ENCODE measurements at regions of chr12 and their contacts with region 1.

Region 1: GRCh38 chr12:118372541-118373495 is at the start of gene TAOK3:
- DNase-seq: peak; percentile 94 to 99 (median 96)
- ATAC-seq: peak; percentile 85
- H3K4me3 ChIP-seq: peak within 1 kb of the TSS; percentile 85 to 89
- H3K4me3 Mint-ChIP-seq: peak within 1 kb of the TSS; percentile 92
- H3K27ac ChIP-seq: peak within 1 kb of the TSS; percentile 67 to 73
- H3K27ac Mint-ChIP-seq: peak within 1 kb of the TSS; percentile 95
- H3K4me1 ChIP-seq: peaks cover 31% of the 10 kb centered on the region
- H3K4me1 Mint-ChIP-seq: peaks cover 54% of the 10 kb centered on the region
- H3K27me3 ChIP-seq: no peaks in the 10 kb centered on the region
- H3K27me3 Mint-ChIP-seq: no peaks in the 10 kb centered on the region
- CTCF ChIP-seq: no peak
- total RNA-seq, gene TAOK3: 46.5 to 47.3 TPM

Region 2: DNA sequence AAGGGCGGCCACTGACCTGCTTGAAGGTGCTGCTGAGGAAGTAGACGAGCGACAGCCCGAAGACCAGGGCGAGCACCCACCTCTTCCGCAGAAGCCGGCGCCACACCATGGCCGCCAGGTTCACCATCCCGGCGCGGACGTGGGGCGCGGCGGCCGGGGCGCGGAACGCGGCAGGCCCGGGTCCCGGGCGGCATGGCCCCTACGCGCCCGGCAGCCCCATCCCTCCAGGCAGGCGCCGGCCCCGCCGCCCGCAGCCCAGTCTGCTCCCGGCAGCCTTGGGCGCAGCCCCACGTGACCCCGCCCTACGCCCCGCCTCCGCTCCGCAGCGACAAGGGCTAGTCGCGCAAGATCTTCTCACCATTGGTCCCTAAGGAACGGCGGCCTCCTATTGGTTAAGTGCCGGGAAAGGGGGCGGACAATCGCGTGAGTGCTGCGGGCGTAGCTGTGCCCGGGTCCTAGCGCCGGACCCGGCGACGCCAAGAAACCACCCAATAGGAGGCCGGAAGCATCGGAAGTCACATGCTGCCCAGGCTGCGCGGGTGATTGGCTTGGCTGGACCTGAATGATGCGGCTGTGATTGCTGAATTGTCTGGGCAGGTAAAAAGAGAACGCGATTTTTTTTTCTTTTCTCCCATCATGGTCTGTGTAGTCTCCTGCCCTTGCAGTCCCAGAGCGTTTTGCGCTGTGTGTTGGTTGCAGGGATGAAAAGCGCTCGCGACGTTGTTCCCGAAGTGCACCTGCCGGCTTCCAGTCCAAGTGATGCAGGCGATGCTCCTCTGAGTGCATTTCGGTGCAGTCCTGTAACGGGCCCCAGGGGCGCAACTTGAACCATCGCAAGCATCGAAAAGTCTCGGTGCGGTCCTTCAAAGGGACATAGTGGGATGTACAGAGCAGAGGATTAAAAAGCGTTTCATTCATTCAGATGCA is 1634.8 kb before region 1 on chr12 and contains the starts of genes RNFT2 and SPRING1:
- CTCF ChIA-PET with region 1: no interaction called
- POLR2A ChIA-PET with region 1: no interaction called
- intact Hi-C with region 1: loop called (anchors 10 kb)
- DNase-seq: peak; percentile 98 to 99 (median 99)
- ATAC-seq: peak; percentile 97
- H3K4me3 ChIP-seq: peak within 1 kb of the TSS; percentile 76 to 82
- H3K4me3 Mint-ChIP-seq: peak within 1 kb of the TSS; percentile 95
- H3K27ac ChIP-seq: peak within 1 kb of the TSS; percentile 55 to 61
- H3K27ac Mint-ChIP-seq: peak within 1 kb of the TSS; percentile 91
- H3K4me1 ChIP-seq: peaks cover 13% of the 10 kb centered on the region
- H3K4me1 Mint-ChIP-seq: peaks cover 39% of the 10 kb centered on the region
- H3K27me3 ChIP-seq: no peaks in the 10 kb centered on the region
- H3K27me3 Mint-ChIP-seq: no peaks in the 10 kb centered on the region
- CTCF ChIP-seq: no peak
- total RNA-seq, gene RNFT2: 3.8 to 4.1 TPM
- total RNA-seq, gene SPRING1: 14.1 to 14.4 TPM

Region 3: DNA sequence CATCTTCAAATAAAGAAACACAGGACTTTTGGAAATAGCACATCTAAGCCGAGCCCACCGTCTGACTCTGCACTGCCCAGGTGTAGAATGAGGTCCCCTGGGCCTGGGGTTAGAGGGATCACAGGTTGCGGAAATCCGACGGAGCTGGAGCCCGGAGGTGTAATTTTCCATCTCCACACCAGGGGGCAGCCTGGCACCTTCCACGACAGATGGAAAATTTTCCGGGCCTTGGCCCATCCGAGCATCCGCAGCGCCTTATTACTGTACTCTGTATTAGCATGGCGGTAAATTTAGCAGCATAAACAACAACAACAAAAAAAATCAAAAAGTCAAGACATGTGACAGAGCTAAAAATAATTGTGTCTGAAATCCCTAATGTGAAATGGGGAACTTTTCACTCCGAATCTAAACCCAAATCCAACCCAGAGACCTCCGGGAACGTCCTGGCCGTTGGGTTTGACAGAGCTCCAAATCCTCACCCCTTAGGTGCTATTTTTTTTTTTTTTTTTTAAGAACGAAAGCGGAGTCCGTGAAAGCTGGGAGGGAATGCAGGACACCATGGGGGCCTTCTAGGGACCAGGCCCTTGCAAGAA is 497.9 kb before region 1 on chr12:
- CTCF ChIA-PET with region 1: no interaction called
- POLR2A ChIA-PET with region 1: no interaction called
- intact Hi-C with region 1: loop called (anchors 10 kb)
- DNase-seq: peak; percentile 5 to 64 (median 53)
- ATAC-seq: peak; percentile 68
- H3K4me3 ChIP-seq: no peak overlapping the region
- H3K4me3 Mint-ChIP-seq: no peak overlapping the region
- H3K27ac ChIP-seq: no peak overlapping the region
- H3K27ac Mint-ChIP-seq: no peak overlapping the region
- H3K4me1 ChIP-seq: no peaks in the 10 kb centered on the region
- H3K4me1 Mint-ChIP-seq: peaks cover 7% of the 10 kb centered on the region
- H3K27me3 ChIP-seq: no peaks in the 10 kb centered on the region
- H3K27me3 Mint-ChIP-seq: peaks cover 24% of the 10 kb centered on the region
- CTCF ChIP-seq: peak; percentile 69

Region 4: GRCh38 chr12:118120579-118121363 is 252.0 kb before region 1 on chr12:
- CTCF ChIA-PET with region 1: interaction called, 39 read pairs
- POLR2A ChIA-PET with region 1: interaction called, 4 read pairs
- intact Hi-C with region 1: loop called (anchors 1 to 5 kb)
- DNase-seq: peak; percentile 25 to 74 (median 60)
- ATAC-seq: peak; percentile 65
- H3K4me3 ChIP-seq: no peak overlapping the region
- H3K4me3 Mint-ChIP-seq: peak overlapping the region; percentile 0
- H3K27ac ChIP-seq: peak overlapping the region in 1 of 2 experiments; percentile 34
- H3K27ac Mint-ChIP-seq: peak overlapping the region; percentile 47
- H3K4me1 ChIP-seq: peaks cover 4% of the 10 kb centered on the region
- H3K4me1 Mint-ChIP-seq: peaks cover 11% of the 10 kb centered on the region
- H3K27me3 ChIP-seq: no peaks in the 10 kb centered on the region
- H3K27me3 Mint-ChIP-seq: no peaks in the 10 kb centered on the region
- CTCF ChIP-seq: peak; percentile 75

Region 5: DNA sequence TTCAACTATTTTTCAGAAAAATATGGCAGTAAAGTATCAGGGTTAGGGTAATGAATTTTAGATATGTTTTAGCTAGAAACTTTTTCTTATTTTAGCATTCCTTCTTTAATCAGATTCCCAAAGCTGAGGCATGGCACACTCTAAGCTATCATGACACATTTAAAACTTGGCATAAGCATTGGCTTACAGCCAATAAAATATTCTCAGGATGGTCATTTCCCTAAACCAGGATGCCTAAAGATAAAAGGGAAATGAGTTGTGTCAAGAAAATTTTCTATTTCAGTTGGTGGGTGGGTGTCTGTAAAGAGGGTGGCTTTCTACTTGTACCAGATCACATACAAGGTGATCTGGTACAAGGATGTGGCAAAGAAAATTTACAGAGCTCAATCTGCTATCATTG is 189.1 kb before region 1 on chr12:
- CTCF ChIA-PET with region 1: interaction called, 67 read pairs
- POLR2A ChIA-PET with region 1: interaction called, 10 read pairs
- intact Hi-C with region 1: loop called (anchors 1 kb)
- DNase-seq: no peak
- ATAC-seq: no peak
- H3K4me3 ChIP-seq: no peak overlapping the region
- H3K4me3 Mint-ChIP-seq: no peak overlapping the region
- H3K27ac ChIP-seq: no peak overlapping the region
- H3K27ac Mint-ChIP-seq: no peak overlapping the region
- H3K4me1 ChIP-seq: no peaks in the 10 kb centered on the region
- H3K4me1 Mint-ChIP-seq: peaks cover 15% of the 10 kb centered on the region
- H3K27me3 ChIP-seq: no peaks in the 10 kb centered on the region
- H3K27me3 Mint-ChIP-seq: no peaks in the 10 kb centered on the region
- CTCF ChIP-seq: no peak

Region 6: GRCh38 chr12:118357257-118358007 is 15.4 kb before region 1 on chr12:
- CTCF ChIA-PET with region 1: interaction called, 66 read pairs
- POLR2A ChIA-PET with region 1: interaction called, 24 read pairs
- intact Hi-C with region 1: loop called (anchors 1 to 2 kb)
- DNase-seq: peak in 6 of 9 experiments; percentile 33 to 87 (median 60)
- ATAC-seq: peak; percentile 79
- H3K4me3 ChIP-seq: peak overlapping the region; percentile 5 to 9
- H3K4me3 Mint-ChIP-seq: peak overlapping the region; percentile 94
- H3K27ac ChIP-seq: peak overlapping the region; percentile 35 to 77
- H3K27ac Mint-ChIP-seq: peak overlapping the region; percentile 91
- H3K4me1 ChIP-seq: peaks cover 35% of the 10 kb centered on the region
- H3K4me1 Mint-ChIP-seq: peaks cover 65% of the 10 kb centered on the region
- H3K27me3 ChIP-seq: no peaks in the 10 kb centered on the region
- H3K27me3 Mint-ChIP-seq: no peaks in the 10 kb centered on the region
- CTCF ChIP-seq: peak; percentile 24

Region 7: DNA sequence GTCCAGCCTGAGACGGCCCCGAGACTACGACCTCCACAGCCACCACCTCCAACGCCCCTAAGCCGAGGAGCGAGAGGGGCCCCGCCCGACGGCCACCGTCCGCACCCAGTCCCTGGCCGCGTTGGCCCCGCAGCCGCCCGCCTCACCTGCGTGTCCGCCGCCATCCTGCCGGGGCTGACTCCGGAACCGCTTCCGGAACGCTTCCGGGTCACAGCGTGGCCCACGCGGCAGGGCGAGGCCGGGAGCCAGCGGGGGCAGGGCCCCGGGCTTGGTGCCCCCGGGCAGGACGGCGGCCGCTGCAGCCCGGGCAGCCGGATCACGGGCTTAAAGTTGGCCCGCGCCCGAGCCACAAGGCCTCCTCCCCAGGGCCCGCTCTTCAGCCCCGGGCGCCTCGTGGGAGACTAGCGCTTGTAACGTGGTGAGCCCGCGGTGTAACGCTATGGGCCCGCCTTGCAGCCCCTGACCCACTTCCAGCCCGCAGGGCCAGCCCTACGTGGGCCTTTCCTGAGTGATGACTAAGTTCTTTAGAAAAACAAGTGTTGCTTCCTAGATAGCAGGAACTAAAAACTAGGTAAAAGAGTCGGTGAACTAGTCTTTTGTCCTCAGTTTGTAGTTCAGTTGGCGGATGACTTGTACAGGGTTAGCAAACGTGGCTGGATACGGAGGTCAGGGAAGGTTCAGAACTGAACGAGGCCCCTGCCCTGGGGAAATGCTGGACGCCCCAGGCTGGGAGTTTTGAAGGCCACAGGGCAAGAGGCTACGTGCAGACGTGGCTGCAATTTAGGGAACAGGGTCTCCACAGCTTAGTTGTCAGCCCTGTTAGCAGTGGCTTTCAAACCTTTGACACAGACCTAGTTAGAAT is 1821.9 kb after region 1 on chr12 and contains the start of gene GCN1:
- CTCF ChIA-PET with region 1: no interaction called
- POLR2A ChIA-PET with region 1: no interaction called
- intact Hi-C with region 1: loop called in 1 of 2 experiments (anchors 10 kb)
- DNase-seq: peak; percentile 76 to 94 (median 88)
- ATAC-seq: peak; percentile 86
- H3K4me3 ChIP-seq: peak within 1 kb of the TSS; percentile 67 to 72
- H3K4me3 Mint-ChIP-seq: peak within 1 kb of the TSS; percentile 82
- H3K27ac ChIP-seq: peak within 1 kb of the TSS; percentile 73 to 88
- H3K27ac Mint-ChIP-seq: peak within 1 kb of the TSS; percentile 95
- H3K4me1 ChIP-seq: peaks cover 36% of the 10 kb centered on the region
- H3K4me1 Mint-ChIP-seq: peaks cover 44% of the 10 kb centered on the region
- H3K27me3 ChIP-seq: no peaks in the 10 kb centered on the region
- H3K27me3 Mint-ChIP-seq: no peaks in the 10 kb centered on the region
- CTCF ChIP-seq: no peak
- total RNA-seq, gene GCN1: 161 to 163 TPM